Left lung (tissue), 14 donors: ENCODE measurements at regions of chr1 and their contacts with region 1.

Region 1: GRCh38 chr1:209583408-209583807 is at the start of gene CAMK1G:
- DNase-seq: peak in 1 of 4 donors; percentile 65
- ATAC-seq: peak; percentile 34
- H3K4me3 ChIP-seq: no peak within 1 kb of the TSS
- H3K27ac ChIP-seq: no peak within 1 kb of the TSS
- H3K4me1 ChIP-seq: peaks cover 0 to 3% of the 10 kb centered on the region in 2 donors
- H3K27me3 ChIP-seq: peaks cover 14 to 91% of the 10 kb centered on the region in 2 donors
- CTCF ChIP-seq: no peak
- polyA plus RNA-seq, gene CAMK1G: 6.5 to 9.9 (median 9.0) TPM

Region 2: GRCh38 chr1:209692745-209693504 is 109.5 kb after region 1 on chr1:
- intact Hi-C with region 1: loop called (anchors 5 to 10 kb)
- DNase-seq: peak; percentile 45 to 89 (median 76)
- ATAC-seq: peak; percentile 86
- H3K4me3 ChIP-seq: no peak overlapping the region
- H3K27ac ChIP-seq: no peak overlapping the region
- H3K4me1 ChIP-seq: peaks cover 6 to 30% of the 10 kb centered on the region in 2 donors
- H3K27me3 ChIP-seq: no peaks in the 10 kb centered on the region
- CTCF ChIP-seq: peak; percentile 76 to 82